ENCODE measurements at regions of chr6 and their contacts with region 1.

Region 1: DNA sequence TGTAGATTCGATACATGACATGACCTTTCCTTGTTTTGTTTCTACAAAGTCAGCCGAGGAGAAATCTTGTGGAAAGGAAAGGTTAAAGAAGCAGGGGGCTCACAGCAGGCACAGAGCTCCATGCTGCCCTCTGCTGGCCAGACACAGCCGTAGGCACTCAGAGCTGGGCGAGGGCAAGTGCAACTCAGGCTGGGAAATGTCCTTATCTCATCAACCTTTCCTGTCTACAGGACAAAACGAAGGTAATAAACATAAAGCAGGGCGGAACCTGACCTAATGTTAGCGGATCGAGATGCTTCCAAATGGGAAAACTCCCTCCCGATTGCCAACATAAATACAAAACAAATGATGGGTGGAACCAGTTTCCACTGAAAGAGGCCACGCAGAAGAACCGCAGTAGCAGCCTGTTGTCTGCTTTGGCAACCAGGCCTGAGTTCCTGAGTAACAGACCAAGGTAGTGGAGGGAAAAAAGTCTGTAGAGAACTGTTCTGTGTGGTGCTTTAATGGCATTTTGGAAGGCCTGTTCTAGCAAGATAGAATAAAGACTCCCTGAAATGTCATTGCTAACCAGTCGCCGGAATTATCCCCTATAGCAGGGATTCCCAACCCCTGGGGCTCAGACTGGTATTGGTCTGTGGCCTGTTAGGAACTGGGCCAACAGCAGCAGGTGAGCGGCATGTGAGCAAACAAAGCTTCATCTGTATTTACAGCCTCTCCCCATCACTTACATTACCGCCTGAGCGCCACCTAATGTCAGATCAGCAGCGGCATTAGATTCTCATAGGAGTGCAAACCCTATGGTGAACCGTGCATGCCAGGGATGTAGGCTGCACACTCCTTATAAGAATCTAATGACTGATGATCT is 85.2 kb downstream of the MBOAT1 start:
- DNase-seq: peak; percentile 67
- CTCF ChIP-seq: peak; percentile 94

Region 2: DNA sequence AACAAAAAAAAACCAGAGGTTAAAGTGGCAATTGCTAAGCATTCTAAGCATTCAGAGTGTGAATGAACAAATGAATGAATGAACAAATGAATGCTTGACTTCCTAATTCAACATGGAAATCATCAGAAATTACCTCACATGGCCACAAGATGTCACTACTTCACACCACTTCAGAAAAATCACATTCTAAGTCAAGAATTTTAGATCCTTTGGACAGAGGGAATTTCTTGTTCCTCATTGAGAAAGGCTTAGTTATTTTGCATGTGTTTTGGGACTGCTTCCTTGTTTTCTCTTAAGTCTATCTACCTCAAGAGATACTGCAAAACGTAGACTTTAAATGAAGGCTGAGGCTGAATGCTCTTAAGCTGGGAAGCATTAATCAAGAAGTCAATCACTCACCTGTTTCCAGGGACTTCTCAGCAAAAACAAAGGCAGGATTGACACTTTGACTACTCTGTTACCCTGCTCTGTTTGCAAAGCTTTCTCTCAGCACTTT is 34.9 kb before region 1 on chr6:
- CTCF ChIA-PET with region 1: interaction called, 63 read pairs
- POLR2A ChIA-PET with region 1: no interaction called
- DNase-seq: no peak
- CTCF ChIP-seq: peak; percentile 58

Region 3: GRCh38 chr6:20109526-20109925 is 17.5 kb before region 1 on chr6:
- CTCF ChIA-PET with region 1: interaction called, 52 read pairs
- POLR2A ChIA-PET with region 1: no interaction called
- DNase-seq: no peak
- CTCF ChIP-seq: no peak

Region 4: GRCh38 chr6:20142676-20143265 is 15.8 kb after region 1 on chr6:
- CTCF ChIA-PET with region 1: interaction called, 30 read pairs
- POLR2A ChIA-PET with region 1: no interaction called
- DNase-seq: no peak
- CTCF ChIP-seq: no peak

Region 5: DNA sequence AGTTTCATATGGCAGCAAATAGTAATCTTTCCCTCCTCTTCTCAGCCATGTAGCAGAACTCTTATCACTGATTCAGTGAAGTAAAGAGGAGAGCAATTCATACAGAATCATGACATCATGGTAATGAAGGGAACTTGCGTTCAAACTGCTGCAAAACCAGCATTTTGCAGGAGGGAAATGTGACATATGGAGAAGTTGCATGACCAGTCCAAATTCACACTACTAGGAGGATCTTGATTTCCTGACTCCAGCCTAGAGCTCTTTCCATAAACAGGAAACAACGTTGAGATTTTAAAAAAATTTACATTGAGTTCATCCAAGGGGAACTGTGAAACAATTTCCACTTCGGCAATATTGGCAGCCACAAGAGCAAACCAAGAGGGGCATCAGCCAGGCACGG is 21.4 kb after region 1 on chr6:
- CTCF ChIA-PET with region 1: interaction called, 16 read pairs
- POLR2A ChIA-PET with region 1: no interaction called
- DNase-seq: no peak
- CTCF ChIP-seq: no peak